Naive thymus-derived CD4-positive, alpha-beta T cell (primary cell): ENCODE measurements at regions of chr2 and their contacts with region 1.

Region 1: DNA sequence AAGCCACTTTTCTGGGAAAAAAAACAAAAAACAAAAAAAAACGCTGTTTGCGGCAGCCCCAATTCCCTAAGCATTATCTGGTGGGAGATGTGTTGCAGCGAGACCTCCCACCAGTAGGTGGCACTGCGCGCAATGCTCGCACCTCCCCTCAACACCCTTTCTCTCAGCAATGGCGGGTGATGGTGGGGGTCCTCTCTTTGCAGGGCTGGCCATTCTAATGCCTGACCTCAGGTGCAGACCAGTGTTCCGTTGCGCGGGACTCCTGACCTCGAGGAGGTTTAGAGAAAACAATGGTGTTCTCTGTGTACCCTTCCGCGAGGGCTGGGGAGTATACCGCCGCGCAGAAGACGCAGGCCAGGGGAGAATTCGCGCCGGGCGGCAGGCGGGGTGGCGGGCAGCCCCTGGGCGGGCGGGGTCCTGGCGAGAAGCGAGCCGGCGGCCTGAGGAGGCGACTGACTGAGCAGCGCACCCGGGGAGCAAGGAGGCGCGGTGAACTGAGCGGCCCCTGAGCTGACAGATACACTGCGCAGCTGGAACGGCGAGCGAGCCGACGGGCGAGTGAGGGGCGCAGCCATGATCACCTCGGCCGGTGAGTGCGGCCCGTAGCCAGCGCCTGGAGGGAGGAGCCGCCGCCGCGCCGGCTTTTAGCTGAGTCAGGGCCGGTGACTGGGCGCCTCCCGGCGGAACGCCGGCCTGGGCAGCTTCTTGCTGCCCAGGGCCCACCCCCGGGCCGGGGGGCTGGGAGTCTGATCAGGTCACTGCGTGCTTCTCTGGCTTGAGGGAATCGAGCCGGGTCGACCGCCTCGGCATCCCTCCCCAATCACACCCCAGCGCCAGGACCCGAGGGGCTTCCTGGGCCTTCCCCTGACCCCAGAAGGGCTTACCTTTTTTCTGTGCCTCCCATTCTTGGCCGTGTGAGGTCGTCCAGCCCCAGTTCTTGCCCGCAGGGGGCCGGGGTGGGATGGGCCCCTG is at the start of gene PSMD1:
- DNase-seq: peak; percentile 89 to 98 (median 96)
- ATAC-seq: peak; percentile 96
- H3K4me3 ChIP-seq: peak within 1 kb of the TSS; percentile 70
- H3K4me3 Mint-ChIP-seq: peak within 1 kb of the TSS; percentile 96 to 99 (median 99)
- H3K27ac ChIP-seq: peak within 1 kb of the TSS; percentile 91
- H3K27ac Mint-ChIP-seq: peak within 1 kb of the TSS; percentile 99 to 100 (median 100)
- H3K4me1 ChIP-seq: peaks cover 18 to 23% of the 10 kb centered on the region in 2 donors
- H3K4me1 Mint-ChIP-seq: peaks cover 33 to 62% (median 51%) of the 10 kb centered on the region in 7 donors
- H3K27me3 ChIP-seq: no peaks in the 10 kb centered on the region
- H3K27me3 Mint-ChIP-seq: peaks cover 0 to 11% (median 7%) of the 10 kb centered on the region in 5 donors
- total RNA-seq, gene PSMD1: 30.3 to 121 (median 40.1) TPM

Region 2: GRCh38 chr2:229921892-229922445 is 1134.8 kb before region 1 on chr2 and contains the start of gene TRIP12:
- CTCF ChIA-PET with region 1: no interaction called
- POLR2A ChIA-PET with region 1: no interaction called
- intact Hi-C with region 1: loop called (anchors 5 kb)
- DNase-seq: peak; percentile 87 to 97 (median 95)
- ATAC-seq: peak; percentile 88
- H3K4me3 ChIP-seq: peak within 1 kb of the TSS; percentile 99
- H3K4me3 Mint-ChIP-seq: peak within 1 kb of the TSS; percentile 85 to 99 (median 96)
- H3K27ac ChIP-seq: peak within 1 kb of the TSS; percentile 98
- H3K27ac Mint-ChIP-seq: peak within 1 kb of the TSS; percentile 93 to 100 (median 98)
- H3K4me1 ChIP-seq: peaks cover 18 to 35% of the 10 kb centered on the region in 2 donors
- H3K4me1 Mint-ChIP-seq: peaks cover 30 to 62% (median 49%) of the 10 kb centered on the region in 7 donors
- H3K27me3 ChIP-seq: no peaks in the 10 kb centered on the region
- H3K27me3 Mint-ChIP-seq: no peaks in the 10 kb centered on the region
- total RNA-seq, gene TRIP12: 184 to 247 (median 231) TPM

Region 3: GRCh38 chr2:230712443-230713330 is 344.1 kb before region 1 on chr2 and contains the start of gene CAB39:
- CTCF ChIA-PET with region 1: no interaction called
- POLR2A ChIA-PET with region 1: no interaction called
- intact Hi-C with region 1: loop called in 1 of 2 experiments (anchors 2 kb)
- DNase-seq: peak; percentile 82 to 94 (median 90)
- ATAC-seq: peak; percentile 96
- H3K4me3 ChIP-seq: peak within 1 kb of the TSS; percentile 92
- H3K4me3 Mint-ChIP-seq: peak within 1 kb of the TSS; percentile 91 to 99 (median 98)
- H3K27ac ChIP-seq: peak within 1 kb of the TSS; percentile 91
- H3K27ac Mint-ChIP-seq: peak within 1 kb of the TSS; percentile 92 to 98 (median 97)
- H3K4me1 ChIP-seq: peaks cover 27 to 35% of the 10 kb centered on the region in 2 donors
- H3K4me1 Mint-ChIP-seq: peaks cover 31 to 53% (median 50%) of the 10 kb centered on the region in 7 donors
- H3K27me3 ChIP-seq: no peaks in the 10 kb centered on the region
- H3K27me3 Mint-ChIP-seq: no peaks in the 10 kb centered on the region
- total RNA-seq, gene CAB39: 71.0 to 186 (median 95.4) TPM

Region 4: GRCh38 chr2:230902180-230902899 is 154.4 kb before region 1 on chr2:
- CTCF ChIA-PET with region 1: no interaction called
- POLR2A ChIA-PET with region 1: no interaction called
- intact Hi-C with region 1: loop called (anchors 10 kb)
- DNase-seq: peak in 4 of 9 donors; percentile 22 to 49 (median 32)
- ATAC-seq: peak; percentile 71
- H3K4me3 ChIP-seq: no peak overlapping the region
- H3K4me3 Mint-ChIP-seq: no peak overlapping the region
- H3K27ac ChIP-seq: no peak overlapping the region
- H3K27ac Mint-ChIP-seq: peak overlapping the region in 1 of 9 donors; percentile 21
- H3K4me1 ChIP-seq: peaks cover 6 to 13% of the 10 kb centered on the region in 2 donors
- H3K4me1 Mint-ChIP-seq: peaks cover 2 to 25% (median 23%) of the 10 kb centered on the region in 7 donors
- H3K27me3 ChIP-seq: no peaks in the 10 kb centered on the region
- H3K27me3 Mint-ChIP-seq: peaks cover 0 to 46% (median 6%) of the 10 kb centered on the region in 5 donors

Region 5: GRCh38 chr2:231463698-231464575 is 407.2 kb after region 1 on chr2 and contains the start of gene NCL:
- CTCF ChIA-PET with region 1: no interaction called
- POLR2A ChIA-PET with region 1: interaction called, 6 read pairs
- intact Hi-C with region 1: loop called (anchors 1 kb)
- DNase-seq: peak; percentile 75 to 96 (median 91)
- ATAC-seq: peak; percentile 73
- H3K4me3 ChIP-seq: peak within 1 kb of the TSS; percentile 65
- H3K4me3 Mint-ChIP-seq: peak within 1 kb of the TSS; percentile 90 to 99 (median 95)
- H3K27ac ChIP-seq: peak within 1 kb of the TSS; percentile 96
- H3K27ac Mint-ChIP-seq: peak within 1 kb of the TSS; percentile 96 to 100 (median 100)
- H3K4me1 ChIP-seq: peaks cover 26 to 28% of the 10 kb centered on the region in 2 donors
- H3K4me1 Mint-ChIP-seq: peaks cover 39 to 65% (median 44%) of the 10 kb centered on the region in 7 donors
- H3K27me3 ChIP-seq: no peaks in the 10 kb centered on the region
- H3K27me3 Mint-ChIP-seq: no peaks in the 10 kb centered on the region
- total RNA-seq, gene NCL: 411 to 647 (median 426) TPM

Region 6: DNA sequence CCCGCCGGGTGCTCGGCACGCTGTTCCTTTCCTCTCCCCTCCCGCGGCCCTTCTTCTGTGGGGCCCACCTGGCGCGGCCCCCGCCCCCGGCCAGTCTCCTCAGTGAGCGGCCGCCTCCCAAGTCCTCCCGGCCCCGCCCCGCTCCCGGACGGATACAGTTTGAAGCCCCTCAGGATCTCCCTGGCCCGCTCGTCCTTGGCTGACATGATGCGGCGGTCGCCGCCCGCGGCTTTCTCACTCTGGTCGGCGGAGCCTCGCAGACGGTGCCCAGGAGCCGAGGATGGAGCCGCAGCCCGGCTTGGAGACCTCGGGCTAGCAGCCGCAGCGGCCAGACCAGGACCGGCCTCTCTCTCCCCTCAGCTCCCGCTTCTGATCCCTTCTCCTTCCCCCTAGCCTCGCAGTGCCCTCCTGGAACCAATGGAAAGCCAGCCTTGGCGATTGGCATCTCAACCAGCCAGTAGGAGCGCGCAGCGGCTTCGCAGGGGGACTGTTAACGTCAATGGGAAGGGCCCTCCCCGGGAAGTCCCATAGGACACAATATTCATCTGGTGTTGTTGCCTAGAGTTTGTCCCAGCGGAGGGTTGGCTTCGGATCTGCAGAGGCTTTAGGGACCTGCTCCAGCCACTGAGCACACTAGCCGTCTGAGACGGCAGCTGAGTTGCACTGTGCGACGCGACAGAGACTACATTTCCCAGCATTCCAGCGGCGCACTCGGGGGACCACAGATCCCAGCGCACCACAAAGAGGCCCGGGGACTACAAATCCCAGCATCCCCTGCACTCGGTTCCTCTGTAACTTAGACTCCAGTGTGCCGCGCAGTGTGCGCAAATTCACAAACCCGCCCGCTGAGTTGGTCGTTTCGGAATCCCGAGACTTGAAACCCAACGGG is 724.4 kb after region 1 on chr2 and contains the start of gene PDE6D:
- CTCF ChIA-PET with region 1: no interaction called
- POLR2A ChIA-PET with region 1: no interaction called
- intact Hi-C with region 1: loop called (anchors 1 to 2 kb)
- DNase-seq: peak; percentile 90 to 98 (median 94)
- ATAC-seq: peak; percentile 94
- H3K4me3 ChIP-seq: peak within 1 kb of the TSS; percentile 100
- H3K4me3 Mint-ChIP-seq: peak within 1 kb of the TSS; percentile 85 to 99 (median 98)
- H3K27ac ChIP-seq: peak within 1 kb of the TSS; percentile 82
- H3K27ac Mint-ChIP-seq: peak within 1 kb of the TSS; percentile 90 to 98 (median 94)
- H3K4me1 ChIP-seq: peaks cover 26 to 30% of the 10 kb centered on the region in 2 donors
- H3K4me1 Mint-ChIP-seq: peaks cover 45 to 76% (median 57%) of the 10 kb centered on the region in 7 donors
- H3K27me3 ChIP-seq: no peaks in the 10 kb centered on the region
- H3K27me3 Mint-ChIP-seq: peaks cover 0 to 5% (median 0%) of the 10 kb centered on the region in 5 donors
- total RNA-seq, gene PDE6D: 14.3 to 35.7 (median 25.2) TPM